ENCODE measurements at regions of chr16 and their contacts with region 1.

Region 1: GRCh38 chr16:66406534-66407221 is 20.4 kb upstream of the BEAN1 start:
- DNase-seq: peak; percentile 96
- H3K4me3 ChIP-seq: peak overlapping the region; percentile 24 to 74 (median 42)
- H3K27ac ChIP-seq: peak overlapping the region in 5 of 8 donors; percentile 44 to 80 (median 65)
- H3K4me1 ChIP-seq: peaks cover 7 to 37% (median 33%) of the 10 kb centered on the region in 6 donors
- H3K27me3 ChIP-seq: peaks cover 0 to 20% (median 0%) of the 10 kb centered on the region in 7 donors
- CTCF ChIP-seq: peak; percentile 76 to 94 (median 90)
- POLR2A ChIP-seq: no peak

Region 2: DNA sequence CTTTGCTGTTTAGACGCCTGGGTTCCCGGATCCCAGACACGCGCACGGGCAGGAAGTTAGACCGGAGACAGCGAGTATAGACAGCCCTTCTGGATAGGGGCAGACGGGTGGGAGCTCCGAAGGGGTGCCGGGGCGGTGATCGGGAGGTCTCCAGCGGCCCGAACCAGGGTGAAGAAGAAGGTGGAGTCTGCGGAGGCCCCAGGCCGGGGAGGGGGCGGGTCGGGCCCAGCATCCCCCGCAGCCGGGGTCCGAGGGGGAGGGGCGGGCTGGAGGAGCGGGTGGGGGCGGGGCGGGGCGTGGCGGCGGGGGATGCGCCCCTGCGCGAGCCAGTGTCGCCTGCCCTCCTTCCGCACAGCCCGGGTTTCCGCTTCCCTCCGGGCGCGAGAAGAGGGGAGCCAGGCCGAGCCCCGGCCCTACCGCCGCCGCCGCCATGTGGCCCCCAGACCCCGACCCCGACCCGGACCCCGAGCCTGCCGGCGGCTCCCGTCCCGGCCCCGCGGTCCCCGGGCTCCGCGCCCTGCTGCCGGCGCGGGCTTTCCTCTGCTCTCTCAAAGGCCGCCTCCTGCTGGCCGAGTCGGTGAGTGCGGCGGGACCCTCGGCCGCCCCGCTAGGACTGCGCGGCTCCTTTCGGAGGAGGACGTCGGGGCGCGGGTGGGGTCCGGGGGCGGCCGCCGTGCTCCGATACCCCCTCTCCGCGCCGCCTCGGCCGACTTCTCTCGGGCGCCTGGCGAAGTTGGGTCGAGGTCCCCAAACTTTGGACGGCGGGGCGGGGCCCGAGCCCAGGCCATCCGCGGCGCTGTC is 197.9 kb after region 1 on chr16 and contains the start of gene CMTM3:
- intact Hi-C with region 1: loop called (anchors 5 kb)
- DNase-seq: peak; percentile 88
- H3K4me3 ChIP-seq: peak within 1 kb of the TSS; percentile 68 to 94 (median 78)
- H3K27ac ChIP-seq: peak within 1 kb of the TSS; percentile 78 to 94 (median 88)
- H3K4me1 ChIP-seq: peaks cover 32 to 63% (median 57%) of the 10 kb centered on the region in 6 donors
- H3K27me3 ChIP-seq: peaks cover 0 to 25% (median 0%) of the 10 kb centered on the region in 7 donors
- CTCF ChIP-seq: peak; percentile 54 to 90 (median 77)
- POLR2A ChIP-seq: no peak
- total RNA-seq, gene CMTM3: 37.6 to 53.1 (median 41.9) TPM

Measured in spleen (tissue), 13 donors.